Activated naive CD4-positive, alpha-beta T cell treated with anti-CD3 and anti-CD28 coated beads for 36 hours (primary cell): ENCODE measurements at regions of chr1 and their contacts with region 1.

Region 1: GRCh38 chr1:53959664-53960250 is 13.6 kb downstream of the LRRC42 start:
- DNase-seq: no peak
- H3K4me3 Mint-ChIP-seq: no peak overlapping the region
- H3K27ac Mint-ChIP-seq: no peak overlapping the region
- H3K4me1 Mint-ChIP-seq: peaks cover 11% of the 10 kb centered on the region
- H3K27me3 Mint-ChIP-seq: no peaks in the 10 kb centered on the region

Region 2: GRCh38 chr1:53869454-53870117 is 90.2 kb before region 1 on chr1:
- CTCF ChIA-PET with region 1: interaction called, 13 read pairs
- intact Hi-C with region 1: no loop called
- DNase-seq: no peak
- H3K4me3 Mint-ChIP-seq: no peak overlapping the region
- H3K27ac Mint-ChIP-seq: no peak overlapping the region
- H3K4me1 Mint-ChIP-seq: peaks cover 4% of the 10 kb centered on the region
- H3K27me3 Mint-ChIP-seq: no peaks in the 10 kb centered on the region

Region 3: DNA sequence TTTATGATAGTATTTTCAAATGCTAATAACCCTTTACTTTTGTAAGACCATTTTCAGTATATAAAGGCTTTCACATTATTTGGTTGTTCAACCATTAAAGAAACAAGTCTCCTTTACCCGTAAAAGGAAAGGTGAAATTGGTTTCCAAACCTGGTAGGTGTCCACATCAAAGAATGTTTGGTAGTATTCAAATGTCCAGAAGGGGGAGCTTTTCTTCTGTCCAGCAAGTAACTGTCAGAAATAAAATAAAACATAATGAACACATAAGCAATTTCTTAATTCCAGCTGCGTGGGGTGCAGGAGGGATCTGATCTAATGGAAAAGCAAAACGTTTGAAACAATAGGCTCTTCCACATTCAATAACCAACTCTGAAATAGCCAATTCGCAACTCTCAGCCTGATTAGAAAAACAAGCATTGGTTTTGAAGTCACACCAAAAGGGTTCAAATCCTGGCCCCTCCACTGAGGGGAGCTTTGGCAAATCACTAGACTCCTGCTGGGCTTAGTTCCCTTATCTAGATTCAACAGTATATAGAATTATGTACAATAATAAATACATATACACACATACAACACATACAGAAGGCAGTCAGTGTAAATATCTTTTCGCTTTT is 81.2 kb before region 1 on chr1:
- CTCF ChIA-PET with region 1: interaction called, 27 read pairs
- intact Hi-C with region 1: loop called (anchors 1 kb)
- DNase-seq: no peak
- H3K4me3 Mint-ChIP-seq: no peak overlapping the region
- H3K27ac Mint-ChIP-seq: no peak overlapping the region
- H3K4me1 Mint-ChIP-seq: peaks cover 3% of the 10 kb centered on the region
- H3K27me3 Mint-ChIP-seq: no peaks in the 10 kb centered on the region

Region 4: DNA sequence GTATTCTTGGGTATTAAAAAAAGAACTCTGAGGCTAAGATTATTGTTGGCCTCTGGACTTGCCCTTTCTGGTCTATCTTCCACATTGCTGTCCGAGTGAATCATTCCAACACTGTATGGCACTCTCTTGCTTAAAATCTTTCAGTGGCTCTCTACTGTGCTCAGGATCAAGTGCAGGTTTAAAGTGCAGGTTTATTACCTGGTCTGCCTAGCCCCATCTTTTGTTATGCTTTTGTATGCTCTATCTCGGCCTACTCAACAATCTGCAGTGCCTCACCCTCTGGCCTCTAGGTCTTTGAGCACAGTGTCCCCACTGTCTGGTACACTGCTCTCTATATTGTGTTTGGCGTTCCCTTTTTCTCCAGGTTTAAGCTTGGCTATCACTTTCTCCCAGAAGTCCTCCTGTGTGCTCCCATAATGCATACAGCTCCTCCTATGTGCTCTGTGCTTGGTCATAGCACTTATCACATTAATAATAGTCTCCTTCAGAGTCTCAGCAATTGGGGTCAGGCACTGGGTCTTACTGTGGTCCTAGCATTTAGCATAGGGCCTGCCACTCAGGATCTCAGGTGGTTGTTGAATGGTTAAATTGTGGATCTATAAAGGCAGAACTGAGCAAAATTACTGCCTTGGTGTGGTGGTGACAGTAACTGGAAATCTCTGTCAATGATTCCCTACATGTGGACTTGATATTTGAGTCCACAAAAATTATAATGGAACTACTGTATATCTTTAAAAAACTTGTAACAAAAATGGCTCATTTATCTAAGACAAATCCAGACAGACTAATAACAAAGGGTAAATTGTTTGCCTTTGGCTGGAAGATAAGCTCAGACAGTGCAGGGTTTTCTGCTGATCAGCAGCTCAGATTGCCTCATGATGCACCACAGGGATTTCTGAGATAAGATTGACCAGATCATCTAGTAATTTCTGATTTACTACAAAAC is 68.8 kb after region 1 on chr1:
- CTCF ChIA-PET with region 1: interaction called, 10 read pairs
- intact Hi-C with region 1: no loop called
- DNase-seq: no peak
- H3K4me3 Mint-ChIP-seq: no peak overlapping the region
- H3K27ac Mint-ChIP-seq: no peak overlapping the region
- H3K4me1 Mint-ChIP-seq: no peaks in the 10 kb centered on the region
- H3K27me3 Mint-ChIP-seq: no peaks in the 10 kb centered on the region